Dorsolateral prefrontal cortex (tissue), 120 donors: ENCODE measurements at regions of chr16 and their contacts with region 1.

Region 1: DNA sequence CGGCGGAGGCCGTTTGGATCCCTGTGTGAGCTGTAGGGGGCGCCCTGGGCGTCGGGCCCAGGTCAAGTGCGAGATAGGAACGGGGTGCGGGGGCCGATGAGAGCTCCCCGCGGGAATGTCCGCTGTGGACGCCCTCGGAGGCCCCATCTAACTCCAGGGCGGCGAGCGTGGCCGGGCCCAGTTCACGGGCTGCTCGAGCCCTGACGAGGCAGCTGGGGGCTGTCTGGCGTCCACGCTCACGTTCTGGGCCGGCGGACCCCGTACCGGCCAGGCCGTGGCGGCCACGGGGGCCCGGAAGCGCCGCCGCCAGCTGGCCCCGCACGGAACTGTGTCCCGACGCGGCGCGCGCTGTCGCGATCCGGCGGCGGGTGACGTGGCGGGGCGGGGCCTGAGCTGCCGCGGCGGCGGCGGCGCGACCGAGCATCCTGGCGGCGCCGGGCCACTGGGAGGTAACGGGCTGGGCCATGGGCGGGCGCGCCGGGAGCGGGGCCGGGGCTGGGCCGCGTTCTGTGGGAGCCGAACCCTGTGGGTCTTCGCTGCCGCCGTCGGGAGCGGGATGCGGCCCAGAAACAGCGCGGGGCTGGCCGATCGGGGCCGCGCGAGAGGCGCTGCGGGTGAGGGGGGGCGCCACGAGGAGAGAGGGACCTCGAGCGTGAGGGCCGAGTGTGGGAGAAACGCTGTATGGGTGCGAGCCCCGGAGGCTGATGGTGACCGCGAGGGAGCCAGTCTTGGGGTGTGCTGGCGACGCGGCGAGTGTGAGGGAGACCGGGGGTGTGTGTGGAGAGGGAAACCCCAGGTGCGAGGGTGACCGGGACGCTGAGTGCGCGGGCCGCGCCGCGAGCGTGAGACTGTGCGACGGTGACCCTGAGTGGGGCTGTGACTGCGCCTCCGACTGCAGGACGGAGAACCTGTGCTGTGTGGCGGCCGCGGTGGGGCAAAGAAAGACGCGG is at the start of gene SLC7A6:
- DNase-seq: peak; percentile 59 to 84 (median 68)
- H3K4me3 ChIP-seq: peak within 1 kb of the TSS; percentile 64 to 97 (median 87)
- H3K27ac ChIP-seq: peak within 1 kb of the TSS; percentile 45 to 97 (median 90)
- H3K27me3 ChIP-seq: no peaks in the 10 kb centered on the region
- CTCF ChIP-seq: peak in 53 of 56 donors; percentile 19 to 80 (median 64)
- total RNA-seq, gene SLC7A6: 21.3 to 61.6 (median 36.3) TPM

Region 2: DNA sequence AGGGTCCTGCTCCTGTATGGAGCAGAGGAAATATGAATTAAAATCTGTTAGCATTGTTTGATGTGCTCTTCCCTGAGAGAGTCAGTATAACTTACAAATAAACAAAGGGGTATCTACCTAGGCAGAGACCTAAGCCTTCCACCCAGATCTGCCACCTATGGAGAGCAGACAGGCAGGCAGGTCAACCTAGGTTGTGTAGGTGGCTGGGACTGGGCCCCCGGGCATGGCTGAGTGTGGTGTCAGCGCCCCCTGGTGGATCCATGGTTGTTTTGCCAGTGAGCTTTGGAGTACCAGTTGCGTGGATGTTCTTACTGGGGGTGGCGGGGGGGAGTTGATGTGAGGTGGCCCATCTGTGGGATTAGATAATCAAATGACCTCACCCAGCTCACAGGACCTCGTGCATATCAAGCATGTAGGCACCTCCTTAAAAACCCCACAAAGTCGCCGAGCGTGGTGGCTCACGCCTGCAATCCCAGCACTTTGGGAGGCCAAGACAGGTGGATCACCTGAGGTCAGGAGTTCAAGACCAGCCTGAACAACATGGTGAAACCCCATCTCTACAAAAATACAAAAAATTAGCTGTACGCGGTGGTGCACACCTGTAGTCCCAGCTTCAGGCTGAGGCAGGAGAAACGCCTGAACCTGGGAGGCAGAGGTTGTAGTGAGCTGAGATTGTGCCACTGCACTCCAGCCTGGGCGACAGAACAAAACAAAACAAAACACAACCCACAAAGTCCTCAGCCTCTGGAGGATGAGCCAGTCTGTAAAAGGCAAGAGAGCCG is 223.7 kb before region 1 on chr16:
- intact Hi-C with region 1: no loop called
- DNase-seq: peak; percentile 69 to 85 (median 79)
- H3K4me3 ChIP-seq: no peak overlapping the region
- H3K27ac ChIP-seq: peak overlapping the region in 10 of 59 donors; percentile 0 to 48 (median 26)
- H3K27me3 ChIP-seq: no peaks in the 10 kb centered on the region
- CTCF ChIP-seq: peak; percentile 45 to 88 (median 78)

Region 3: GRCh38 chr16:68179196-68179795 is 85.1 kb before region 1 on chr16:
- intact Hi-C with region 1: no loop called
- DNase-seq: no peak
- H3K4me3 ChIP-seq: no peak overlapping the region
- H3K27ac ChIP-seq: no peak overlapping the region
- H3K27me3 ChIP-seq: no peaks in the 10 kb centered on the region
- CTCF ChIP-seq: no peak

Region 4: DNA sequence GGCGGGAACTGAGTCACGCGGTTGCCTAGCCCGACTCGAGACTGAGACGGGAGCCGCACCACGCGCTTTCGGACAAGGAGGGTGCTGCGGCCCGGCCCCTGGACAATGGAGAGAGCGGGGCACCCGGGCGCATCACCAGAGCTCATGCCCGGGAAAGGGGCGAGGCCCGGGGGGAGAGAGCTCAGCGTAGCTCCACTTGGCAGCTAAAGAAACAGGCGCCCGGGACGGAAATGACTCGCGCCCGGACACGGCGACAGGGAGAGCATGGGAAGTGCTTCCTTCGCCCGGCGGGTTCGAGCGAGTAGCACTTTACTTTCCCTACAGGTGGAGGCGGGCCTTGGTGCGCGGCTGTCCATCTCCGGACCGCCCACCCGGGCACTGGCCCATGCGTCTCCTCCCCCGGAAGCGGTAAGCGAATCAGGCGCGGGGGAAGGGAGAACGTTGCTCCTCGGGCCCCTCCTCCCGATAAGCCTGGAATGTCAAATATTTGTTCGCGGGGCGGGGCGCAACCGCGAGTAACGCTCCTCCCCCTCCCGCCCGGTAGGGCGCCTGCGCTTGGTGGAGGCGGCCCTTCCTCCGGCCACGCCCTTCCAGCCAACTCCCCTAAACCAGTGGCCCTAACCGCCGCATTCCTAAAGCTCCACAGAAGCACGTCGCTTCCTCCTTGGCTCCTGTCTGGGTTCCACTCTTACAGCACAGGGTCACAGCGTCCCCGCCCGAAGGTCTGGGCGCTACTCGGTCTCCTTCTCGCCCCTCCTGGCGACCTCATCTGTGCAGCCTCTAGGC is 27.0 kb before region 1 on chr16:
- intact Hi-C with region 1: no loop called
- DNase-seq: peak; percentile 92 to 98 (median 96)
- H3K4me3 ChIP-seq: peak overlapping the region; percentile 51 to 93 (median 75)
- H3K27ac ChIP-seq: peak overlapping the region; percentile 20 to 91 (median 79)
- H3K27me3 ChIP-seq: no peaks in the 10 kb centered on the region
- CTCF ChIP-seq: peak in 27 of 56 donors; percentile 6 to 60 (median 29)

Region 5: GRCh38 chr16:68328151-68328859 is 63.9 kb after region 1 on chr16:
- intact Hi-C with region 1: loop called (anchors 2 to 5 kb)
- DNase-seq: peak; percentile 57 to 89 (median 80)
- H3K4me3 ChIP-seq: peak overlapping the region in 2 of 59 donors; percentile 3 to 33
- H3K27ac ChIP-seq: peak overlapping the region in 37 of 59 donors; percentile 32 to 91 (median 73)
- H3K27me3 ChIP-seq: no peaks in the 10 kb centered on the region
- CTCF ChIP-seq: peak; percentile 47 to 94 (median 88)

Region 6: GRCh38 chr16:68538880-68539701 is 274.7 kb after region 1 on chr16 and contains the start of gene ZFP90:
- intact Hi-C with region 1: no loop called
- DNase-seq: peak; percentile 74 to 94 (median 84)
- H3K4me3 ChIP-seq: peak within 1 kb of the TSS; percentile 61 to 100 (median 98)
- H3K27ac ChIP-seq: peak within 1 kb of the TSS in 58 of 59 donors; percentile 19 to 97 (median 85)
- H3K27me3 ChIP-seq: no peaks in the 10 kb centered on the region
- CTCF ChIP-seq: peak in 42 of 56 donors; percentile 2 to 60 (median 32)
- total RNA-seq, gene ZFP90: 43.3 to 78.1 (median 60.5) TPM